ENCODE measurements at regions of chr10 and their contacts with region 1.

Region 1: DNA sequence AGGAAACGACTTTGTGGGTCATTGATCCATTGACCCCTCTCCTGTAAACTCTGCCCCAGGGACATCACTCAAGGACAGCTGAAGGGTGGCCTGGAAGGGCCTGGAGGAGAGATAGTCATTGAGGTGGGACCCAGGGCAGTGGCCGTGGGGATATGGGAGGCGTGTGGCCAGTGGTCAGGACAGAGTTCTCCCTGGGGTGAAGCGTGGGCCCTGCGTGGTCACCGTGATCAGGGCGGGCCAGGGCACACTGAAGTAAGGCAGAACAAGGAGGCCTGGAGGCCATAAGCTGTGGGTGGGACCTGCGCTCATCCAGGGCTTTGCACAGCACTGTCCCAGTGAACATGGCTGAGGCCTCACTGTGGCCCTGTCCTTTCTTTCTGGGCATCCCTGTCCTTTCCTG is 177.9 kb downstream of the ZNF248 start:
- H3K4me3 Mint-ChIP-seq: no peak overlapping the region
- H3K27ac Mint-ChIP-seq: no peak overlapping the region
- H3K4me1 Mint-ChIP-seq: no peaks in the 10 kb centered on the region
- H3K27me3 Mint-ChIP-seq: no peaks in the 10 kb centered on the region

Region 2: GRCh38 chr10:37734976-37735375 is 55.5 kb after region 1 on chr10:
- intact Hi-C with region 1: loop called (anchors 10 kb)
- H3K4me3 Mint-ChIP-seq: no peak overlapping the region
- H3K27ac Mint-ChIP-seq: no peak overlapping the region
- H3K4me1 Mint-ChIP-seq: no peaks in the 10 kb centered on the region
- H3K27me3 Mint-ChIP-seq: no peaks in the 10 kb centered on the region

Measured in dendritic cell treated with granulocyte-macrophage colony-stimulating factor and Interleukin-4, amounts not matched to agents 40 ng/mL and 50 ng/mL, for 4 days (primary cell).